Posterior vena cava (tissue), 2 donors: ENCODE measurements at regions of chr7 and their contacts with region 1.

Region 1: DNA sequence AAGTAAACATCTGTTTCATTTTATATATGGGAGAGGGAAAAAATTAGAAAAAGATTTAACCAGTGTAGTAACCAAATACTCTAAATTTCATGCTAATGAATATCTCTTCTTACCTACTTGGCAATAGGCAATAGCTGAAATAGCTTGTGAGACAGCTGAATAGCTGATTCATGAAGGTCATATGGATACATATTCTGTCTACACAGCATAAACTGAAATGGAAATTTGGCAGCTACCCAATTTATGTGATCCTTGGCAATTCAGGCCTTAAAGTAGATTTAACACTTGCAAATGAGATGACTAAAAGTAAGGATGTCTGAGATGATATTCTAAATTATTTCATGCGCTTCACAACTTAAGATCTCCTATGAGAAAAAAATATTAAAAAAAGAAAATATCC is 261.2 kb upstream of the SEMA3A start:
- DNase-seq: no peak

Region 2: DNA sequence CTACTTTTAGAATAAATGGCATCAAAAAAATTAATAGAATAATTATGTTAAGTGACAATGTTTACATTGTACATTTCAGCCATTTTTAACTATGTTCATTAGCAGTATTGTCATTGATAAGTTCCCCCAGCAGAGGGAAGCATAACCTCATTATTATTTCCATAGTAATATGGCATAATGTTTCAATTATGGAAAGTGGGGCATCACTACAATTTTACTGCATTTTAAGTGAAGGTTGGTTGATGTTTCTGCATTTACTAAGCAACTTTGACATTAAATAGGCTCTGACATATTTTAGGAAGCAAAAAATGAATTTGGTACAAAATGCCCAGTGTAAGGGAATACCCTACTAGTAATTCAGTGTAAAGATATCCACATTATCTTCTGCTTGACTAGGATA is 479.5 kb before region 1 on chr7:
- intact Hi-C with region 1: loop called in 1 of 2 experiments (anchors 10 kb)
- DNase-seq: no peak